GM10248 (cell line): ENCODE measurements at regions of chr20 and their contacts with region 1.

Region 1: GRCh38 chr20:38985603-38986170 is 23.5 kb downstream of the DHX35 start:
- DNase-seq: peak; percentile 19
- CTCF ChIP-seq: no peak

Region 2: DNA sequence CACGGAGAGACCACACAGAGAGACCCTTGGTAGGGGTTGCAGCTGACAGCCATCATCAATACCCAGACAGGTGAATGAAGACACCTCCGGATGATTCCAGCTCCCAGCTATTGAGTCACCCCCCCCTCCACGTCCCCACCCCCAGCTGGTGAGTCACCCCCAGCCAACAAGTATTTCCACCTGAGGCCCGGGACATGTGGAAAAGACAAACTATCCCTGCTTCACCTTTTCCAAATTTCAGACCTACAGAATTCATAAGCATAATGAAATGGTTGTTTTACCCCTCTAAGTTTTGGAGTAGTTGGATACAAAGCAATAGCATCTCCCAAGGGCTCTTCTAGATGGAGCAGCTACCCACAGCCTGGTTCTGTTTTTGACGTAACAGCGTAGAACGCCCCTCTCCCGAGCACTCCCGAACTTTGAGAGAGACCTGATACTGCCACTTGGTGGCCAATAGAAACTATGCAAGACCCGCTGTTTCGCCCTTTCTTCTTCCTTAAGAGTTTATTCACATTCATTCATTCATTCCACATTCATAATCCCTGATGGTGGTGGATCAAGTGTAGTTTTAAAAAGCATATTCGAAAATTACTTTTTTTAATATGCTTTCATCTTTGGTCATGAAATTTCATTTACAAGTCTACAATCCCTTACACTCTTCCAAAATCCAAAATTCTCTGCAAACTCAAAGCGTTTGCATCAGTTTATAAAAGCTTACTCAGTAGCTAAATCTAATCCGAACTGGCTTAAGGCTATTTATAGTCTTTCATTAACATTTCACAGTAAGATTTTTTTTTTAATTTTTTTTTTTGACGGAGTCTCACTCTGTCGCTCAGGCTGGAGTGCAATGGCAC is 195.3 kb before region 1 on chr20:
- CTCF ChIA-PET with region 1: no interaction called
- POLR2A ChIA-PET with region 1: no interaction called
- DNase-seq: no peak
- CTCF ChIP-seq: peak; percentile 58

Region 3: DNA sequence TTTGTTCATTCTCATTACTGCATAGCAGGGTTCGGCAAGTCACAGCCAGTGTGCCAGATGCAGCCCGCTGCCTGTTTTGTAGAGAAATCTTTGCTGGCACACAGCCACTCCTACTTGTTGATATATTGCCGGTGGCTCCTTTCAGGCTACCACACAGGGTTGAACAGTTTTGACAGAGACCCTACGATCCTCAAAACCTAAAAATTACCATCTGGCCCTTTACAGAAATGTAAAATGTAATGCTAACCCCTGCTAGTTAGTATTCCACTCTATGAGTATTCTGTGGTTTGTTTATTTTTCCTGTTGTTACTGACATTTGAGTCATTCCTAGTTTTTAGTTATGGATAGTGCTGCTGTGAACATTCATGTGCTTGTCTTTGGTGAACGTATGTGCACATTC is 12.0 kb before region 1 on chr20:
- CTCF ChIA-PET with region 1: interaction called, 22 read pairs
- POLR2A ChIA-PET with region 1: no interaction called
- DNase-seq: no peak
- CTCF ChIP-seq: no peak